Endothelial cell of umbilical vein (primary cell): ENCODE measurements at regions of chr10 and their contacts with region 1.

Region 1: GRCh38 chr10:92592761-92593618 is at the start of gene KIF11:
- DNase-seq: peak; percentile 98
- H3K4me3 ChIP-seq: peak within 1 kb of the TSS; percentile 75 to 95 (median 93)
- H3K27ac ChIP-seq: peak within 1 kb of the TSS; percentile 83
- H3K4me1 ChIP-seq: peaks cover 33% of the 10 kb centered on the region
- H3K27me3 ChIP-seq: no peaks in the 10 kb centered on the region
- CTCF ChIP-seq: no peak
- POLR2A ChIP-seq: peak; percentile 96
- total RNA-seq, gene KIF11: 42.6 and 42.8 TPM in 2 replicates

Region 2: GRCh38 chr10:92573798-92574547 is 19.0 kb before region 1 on chr10 and contains the start of gene IDE:
- CTCF ChIA-PET with region 1: interaction called, 14 read pairs
- POLR2A ChIA-PET with region 1: interaction called, 3 read pairs
- dilution Hi-C with region 1: no loop called
- intact Hi-C with region 1: loop called (anchors 1 kb)
- DNase-seq: peak; percentile 92
- H3K4me3 ChIP-seq: peak within 1 kb of the TSS; percentile 63 to 84 (median 68)
- H3K27ac ChIP-seq: peak within 1 kb of the TSS; percentile 89
- H3K4me1 ChIP-seq: peaks cover 18% of the 10 kb centered on the region
- H3K27me3 ChIP-seq: no peaks in the 10 kb centered on the region
- CTCF ChIP-seq: peak; percentile 83 to 87
- POLR2A ChIP-seq: peak; percentile 84
- total RNA-seq, gene IDE: 52.6 and 53.5 TPM in 2 replicates

Region 3: DNA sequence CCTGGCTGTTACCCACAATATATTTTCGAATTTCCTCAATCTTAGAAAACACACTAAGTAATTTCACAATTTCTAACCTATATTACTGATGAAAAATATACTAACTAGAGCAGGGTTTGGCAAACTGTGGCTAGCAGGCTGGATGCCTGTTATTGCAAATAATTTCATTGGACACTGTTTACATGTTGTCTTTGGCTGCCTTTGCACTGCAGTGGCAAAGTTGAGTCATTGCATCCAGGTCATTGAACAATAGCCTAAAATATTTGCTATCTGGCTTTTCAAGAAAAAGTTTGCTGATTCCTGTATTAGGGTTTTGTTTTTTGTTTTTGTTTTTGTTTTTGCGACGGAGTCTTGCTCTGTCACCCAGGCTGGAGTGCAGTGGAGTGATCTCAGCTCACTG is 47.1 kb after region 1 on chr10:
- CTCF ChIA-PET with region 1: interaction called, 8 read pairs
- POLR2A ChIA-PET with region 1: interaction called, 3 read pairs
- dilution Hi-C with region 1: no loop called
- intact Hi-C with region 1: loop called (anchors 1 kb)
- DNase-seq: peak; percentile 92
- H3K4me3 ChIP-seq: no peak overlapping the region
- H3K27ac ChIP-seq: peak overlapping the region; percentile 48
- H3K4me1 ChIP-seq: peaks cover 18% of the 10 kb centered on the region
- H3K27me3 ChIP-seq: no peaks in the 10 kb centered on the region
- CTCF ChIP-seq: no peak
- POLR2A ChIP-seq: peak; percentile 26

Region 4: DNA sequence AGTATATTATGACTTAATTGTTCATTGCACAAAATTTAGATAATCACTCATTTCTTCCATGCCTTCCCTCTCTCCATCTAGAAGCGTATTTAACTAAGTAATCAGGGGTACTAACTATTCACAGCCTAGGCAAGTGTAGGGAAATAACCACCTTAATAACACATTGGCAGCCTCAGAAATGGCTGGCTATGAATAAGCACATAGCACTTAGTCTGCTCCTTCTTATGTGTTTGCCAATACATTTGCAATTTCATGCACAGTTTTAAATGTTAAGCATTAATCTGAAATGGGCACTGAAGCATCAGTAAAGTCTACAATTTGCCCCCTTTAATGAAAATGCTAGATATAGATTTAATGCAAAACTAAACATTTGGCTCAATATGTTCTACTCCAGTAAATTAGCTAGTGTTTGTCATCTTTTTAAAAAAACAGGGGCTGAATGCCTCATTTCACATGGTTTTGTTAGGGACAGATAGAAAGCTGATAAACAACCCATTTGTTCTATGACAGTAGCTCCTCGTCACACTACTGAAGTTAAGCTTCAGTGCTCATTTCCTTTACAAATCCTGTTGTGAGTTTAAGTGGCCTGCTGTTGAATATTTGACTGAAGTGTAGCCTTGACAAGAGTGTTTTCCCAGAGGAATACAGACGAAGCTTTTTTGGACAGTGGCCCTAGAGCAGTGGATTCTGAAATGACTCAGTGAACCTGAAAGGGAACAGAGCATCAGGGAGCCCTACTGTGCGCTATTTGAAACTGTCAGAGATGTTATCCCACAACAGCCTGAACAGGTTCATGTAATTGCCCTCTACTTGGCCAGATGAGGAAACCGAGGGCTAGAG is 127.2 kb after region 1 on chr10:
- CTCF ChIA-PET with region 1: no interaction called
- POLR2A ChIA-PET with region 1: no interaction called
- dilution Hi-C with region 1: no loop called
- intact Hi-C with region 1: no loop called
- DNase-seq: no peak
- H3K4me3 ChIP-seq: no peak overlapping the region
- H3K27ac ChIP-seq: no peak overlapping the region
- H3K4me1 ChIP-seq: no peaks in the 10 kb centered on the region
- H3K27me3 ChIP-seq: no peaks in the 10 kb centered on the region
- CTCF ChIP-seq: no peak
- POLR2A ChIP-seq: no peak

Region 5: DNA sequence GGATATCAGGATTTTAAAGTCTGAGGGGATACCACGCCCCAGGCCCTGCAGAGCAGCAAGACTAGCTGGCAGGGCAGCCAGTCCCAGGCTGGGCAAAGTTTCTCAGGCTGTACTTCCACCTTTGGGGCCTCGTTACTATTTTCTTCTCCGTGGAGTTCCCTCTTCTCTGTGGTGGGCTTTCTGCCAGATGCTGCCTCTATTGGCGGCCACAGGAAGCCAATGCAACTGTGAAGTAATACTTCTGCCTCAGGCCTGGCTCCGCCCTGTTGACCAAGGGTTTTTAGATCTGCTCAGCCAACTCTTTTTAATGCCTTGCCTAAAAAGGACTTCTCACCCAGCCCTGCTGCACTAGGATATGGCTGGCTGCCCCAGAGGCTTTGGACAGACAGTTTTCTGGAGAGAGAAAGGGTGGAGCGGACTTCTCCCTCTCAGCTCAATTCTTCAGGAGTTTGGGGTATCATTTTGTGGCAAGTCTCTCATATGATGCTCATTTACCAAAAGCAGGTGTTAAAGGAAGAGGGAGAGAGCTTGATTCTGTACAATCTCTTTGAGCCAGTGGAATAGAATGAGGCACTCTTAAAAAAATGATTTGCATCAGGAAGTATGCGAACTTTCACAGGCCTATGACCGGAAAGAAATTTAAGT is 164.2 kb after region 1 on chr10:
- CTCF ChIA-PET with region 1: no interaction called
- POLR2A ChIA-PET with region 1: no interaction called
- dilution Hi-C with region 1: no loop called
- intact Hi-C with region 1: loop called (anchors 5 kb)
- DNase-seq: peak; percentile 93
- H3K4me3 ChIP-seq: peak overlapping the region in 1 of 3 experiments; percentile 41
- H3K27ac ChIP-seq: peak overlapping the region; percentile 98
- H3K4me1 ChIP-seq: peaks cover 46% of the 10 kb centered on the region
- H3K27me3 ChIP-seq: no peaks in the 10 kb centered on the region
- CTCF ChIP-seq: peak in 1 of 2 donors; percentile 18
- POLR2A ChIP-seq: no peak

Region 6: DNA sequence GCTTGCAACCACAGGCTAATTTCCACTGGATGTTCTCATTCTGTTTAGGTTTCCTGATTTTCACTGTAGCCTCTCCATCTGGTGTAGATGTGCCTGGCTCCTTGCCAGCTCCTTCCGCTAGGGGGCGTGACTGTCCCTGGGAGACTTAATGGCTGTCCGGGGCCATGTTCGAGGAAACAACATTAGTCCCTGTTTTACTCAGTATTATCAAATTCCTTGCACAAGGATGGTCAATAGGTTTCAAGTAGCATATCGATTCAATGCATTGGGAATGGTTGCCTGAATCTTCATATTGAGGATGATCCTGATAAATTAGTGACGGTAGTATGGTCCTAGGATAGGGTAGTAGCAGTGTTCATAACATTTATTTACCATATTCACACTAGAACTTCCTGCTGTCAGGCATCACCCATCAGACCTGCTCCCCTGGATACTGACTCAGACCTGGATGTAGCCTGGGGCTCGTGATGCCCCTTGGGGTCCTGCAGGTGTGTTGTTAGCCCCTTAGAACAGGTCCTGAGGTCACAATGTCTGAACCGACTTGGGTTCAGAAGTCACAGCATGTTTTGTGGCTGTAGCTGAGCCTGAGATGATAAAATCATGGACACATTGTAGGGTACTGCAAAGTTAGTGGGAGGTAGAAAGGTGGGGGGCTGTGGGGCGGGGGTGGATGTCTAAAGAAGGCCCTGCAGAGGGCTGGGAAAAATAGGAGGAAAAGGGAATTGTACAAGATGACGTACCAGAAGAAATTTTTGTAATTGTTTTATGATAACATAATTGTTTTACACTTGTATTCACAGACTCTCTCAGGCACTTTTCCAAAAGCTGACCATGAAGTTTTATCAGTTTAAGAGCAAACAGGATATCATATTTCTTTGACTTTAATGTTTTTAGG is 246.4 kb after region 1 on chr10:
- CTCF ChIA-PET with region 1: interaction called, 3 read pairs
- POLR2A ChIA-PET with region 1: no interaction called
- dilution Hi-C with region 1: no loop called
- intact Hi-C with region 1: loop called (anchors 2 kb)
- DNase-seq: peak; percentile 97
- H3K4me3 ChIP-seq: peak overlapping the region in 1 of 3 experiments; percentile 2
- H3K27ac ChIP-seq: peak overlapping the region; percentile 97
- H3K4me1 ChIP-seq: peaks cover 76% of the 10 kb centered on the region
- H3K27me3 ChIP-seq: no peaks in the 10 kb centered on the region
- CTCF ChIP-seq: peak; percentile 26 to 31
- POLR2A ChIP-seq: no peak

Region 7: DNA sequence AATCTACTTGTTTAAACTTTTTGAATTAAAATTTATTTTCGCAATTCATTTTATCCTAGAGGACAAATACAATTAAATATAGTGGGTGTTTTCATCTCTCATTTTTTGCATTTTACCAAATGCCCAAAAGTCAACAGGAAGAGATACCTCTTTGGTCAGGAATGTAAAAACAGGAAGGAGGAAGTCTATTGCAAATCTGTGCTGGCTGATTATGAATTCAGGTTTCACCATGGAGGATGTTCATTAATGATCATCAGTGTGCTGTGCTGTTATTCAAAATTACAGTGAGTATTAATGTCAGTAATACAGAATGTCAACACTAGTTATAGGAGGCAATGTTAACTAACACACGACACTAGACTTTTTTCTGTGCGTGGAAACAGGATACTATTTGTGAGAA is 280.0 kb after region 1 on chr10:
- CTCF ChIA-PET with region 1: interaction called, 3 read pairs
- POLR2A ChIA-PET with region 1: no interaction called
- dilution Hi-C with region 1: no loop called
- intact Hi-C with region 1: loop called (anchors 5 kb)
- DNase-seq: peak; percentile 92
- H3K4me3 ChIP-seq: peak overlapping the region in 1 of 3 experiments; percentile 40
- H3K27ac ChIP-seq: peak overlapping the region; percentile 72
- H3K4me1 ChIP-seq: peaks cover 68% of the 10 kb centered on the region
- H3K27me3 ChIP-seq: no peaks in the 10 kb centered on the region
- CTCF ChIP-seq: no peak
- POLR2A ChIP-seq: peak; percentile 62

Region 8: DNA sequence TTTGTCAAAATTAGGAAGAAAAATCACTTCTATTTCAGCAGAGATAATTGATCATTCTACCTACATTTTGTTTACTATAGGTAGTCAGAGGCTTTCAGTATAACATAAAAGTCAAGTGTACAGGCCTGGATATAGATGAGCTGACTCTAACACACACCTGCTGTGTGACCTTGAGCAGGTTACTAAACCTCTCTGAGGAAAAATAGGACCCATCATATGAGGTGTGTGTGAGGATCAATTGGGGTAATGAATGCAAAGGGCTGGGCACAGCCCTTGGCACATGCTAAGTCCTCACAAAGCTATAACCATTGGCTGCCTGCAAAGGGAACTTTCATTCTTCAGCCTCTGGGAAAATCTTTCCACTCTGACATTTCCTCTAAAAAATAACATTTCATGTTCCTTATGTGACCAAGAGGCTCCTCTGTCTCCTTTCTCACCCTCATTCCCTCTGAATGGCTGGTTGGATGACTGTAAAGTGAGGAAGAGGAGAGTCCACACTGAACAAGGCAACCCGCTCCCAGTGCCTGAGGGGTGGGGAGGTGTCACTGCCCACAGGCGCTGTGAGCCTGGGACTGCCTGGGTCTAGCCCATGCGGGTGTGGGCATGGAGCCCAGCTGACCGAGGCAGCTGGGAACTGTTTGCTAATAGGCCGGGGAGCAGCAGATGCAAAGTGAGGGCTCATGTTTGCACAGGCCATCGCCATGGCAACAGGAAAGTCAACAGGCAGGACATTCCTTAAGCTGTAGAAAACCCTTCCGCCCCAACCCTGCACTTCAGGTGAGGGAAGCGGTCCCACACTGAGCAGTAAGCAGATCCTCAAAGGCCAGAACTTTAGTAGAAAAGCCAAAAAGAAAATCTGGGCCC is 852.3 kb after region 1 on chr10:
- CTCF ChIA-PET with region 1: no interaction called
- POLR2A ChIA-PET with region 1: no interaction called
- dilution Hi-C with region 1: no loop called
- intact Hi-C with region 1: no loop called
- DNase-seq: peak; percentile 98
- H3K4me3 ChIP-seq: no peak overlapping the region
- H3K27ac ChIP-seq: peak overlapping the region; percentile 67
- H3K4me1 ChIP-seq: peaks cover 22% of the 10 kb centered on the region
- H3K27me3 ChIP-seq: no peaks in the 10 kb centered on the region
- CTCF ChIP-seq: no peak
- POLR2A ChIP-seq: peak; percentile 15